Esophagus muscularis mucosa (tissue), 4 donors: ENCODE measurements at regions of chr12 and their contacts with region 1.

Region 1: GRCh38 chr12:85448548-85449139 is 168.6 kb downstream of the ALX1 start:
- DNase-seq: no peak
- H3K4me3 ChIP-seq: no peak overlapping the region
- H3K27ac ChIP-seq: no peak overlapping the region
- H3K4me1 ChIP-seq: no peaks in the 10 kb centered on the region
- H3K27me3 ChIP-seq: no peaks in the 10 kb centered on the region
- CTCF ChIP-seq: peak; percentile 13 to 42 (median 41)
- EP300 ChIP-seq: no peak
- POLR2A ChIP-seq: no peak

Region 2: DNA sequence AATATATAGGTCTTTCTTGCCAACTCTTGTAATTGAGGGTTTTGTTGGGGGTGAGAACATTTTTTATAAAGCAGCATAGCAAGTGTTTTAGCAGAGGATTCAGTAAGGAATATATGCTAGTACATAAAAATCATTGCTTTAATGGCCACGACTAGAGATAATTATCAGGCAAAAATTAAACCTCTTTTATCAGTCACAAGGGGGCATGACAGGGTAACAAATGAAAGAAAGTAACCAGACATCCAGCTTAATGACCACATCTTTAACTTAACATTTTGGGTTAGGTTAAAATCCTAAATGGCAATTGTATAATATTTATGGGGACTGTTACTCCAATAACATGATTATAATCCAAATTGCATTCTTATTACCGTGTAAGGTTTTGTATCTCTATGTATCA is 292.9 kb before region 1 on chr12:
- intact Hi-C with region 1: loop called (anchors 10 kb)
- DNase-seq: no peak
- H3K4me3 ChIP-seq: no peak overlapping the region
- H3K27ac ChIP-seq: no peak overlapping the region
- H3K4me1 ChIP-seq: no peaks in the 10 kb centered on the region
- H3K27me3 ChIP-seq: no peaks in the 10 kb centered on the region
- CTCF ChIP-seq: peak in 2 of 3 experiments; percentile 21 to 24
- EP300 ChIP-seq: no peak
- POLR2A ChIP-seq: no peak

Region 3: DNA sequence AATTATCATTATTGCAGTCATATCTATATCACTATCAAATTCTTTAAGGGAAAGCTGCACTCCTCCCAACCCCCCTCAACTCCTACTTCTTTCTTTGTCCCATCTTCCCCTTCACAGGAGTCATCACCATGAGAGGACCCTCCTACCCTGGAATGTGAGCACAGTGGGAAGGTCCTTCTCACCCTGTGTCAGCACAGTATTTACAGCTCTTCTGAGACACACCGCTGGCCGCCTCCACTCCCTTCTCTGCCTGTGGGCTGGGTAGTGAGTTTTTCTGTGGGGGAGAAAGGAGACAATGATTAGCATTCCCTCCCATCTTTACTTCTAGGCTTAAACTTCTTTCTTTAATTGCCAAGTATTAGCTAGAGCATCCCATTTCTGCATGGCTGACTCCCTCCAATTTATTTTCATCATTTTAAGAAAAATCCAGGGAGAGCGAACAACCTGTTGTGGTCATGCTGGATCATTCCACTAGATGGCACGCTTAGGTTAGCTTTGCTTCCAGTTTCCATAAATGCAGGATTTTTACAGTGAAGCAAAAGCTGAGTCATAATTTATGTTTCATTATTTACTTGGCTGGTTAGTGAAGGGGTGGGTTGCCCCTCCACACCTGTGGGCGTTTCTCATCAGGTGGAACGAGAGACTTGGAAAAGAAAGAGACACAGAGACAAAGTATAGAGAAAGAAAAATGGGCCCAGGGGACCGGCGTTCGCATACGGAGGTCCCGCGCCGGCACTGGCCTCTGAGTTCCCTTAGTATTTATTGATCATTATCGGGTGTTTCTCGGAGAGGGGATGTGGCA is 19.9 kb after region 1 on chr12:
- intact Hi-C with region 1: no loop called
- DNase-seq: no peak
- H3K4me3 ChIP-seq: peak overlapping the region; percentile 44 to 57 (median 46)
- H3K27ac ChIP-seq: no peak overlapping the region
- H3K4me1 ChIP-seq: peaks cover 0 to 5% (median 5%) of the 10 kb centered on the region in 4 donors
- H3K27me3 ChIP-seq: peaks cover 0 to 24% (median 0%) of the 10 kb centered on the region in 4 donors
- CTCF ChIP-seq: peak; percentile 62 to 76 (median 65)
- EP300 ChIP-seq: no peak
- POLR2A ChIP-seq: no peak